B cell (primary cell): ENCODE measurements at regions of chr10 and their contacts with region 1.

Region 1: DNA sequence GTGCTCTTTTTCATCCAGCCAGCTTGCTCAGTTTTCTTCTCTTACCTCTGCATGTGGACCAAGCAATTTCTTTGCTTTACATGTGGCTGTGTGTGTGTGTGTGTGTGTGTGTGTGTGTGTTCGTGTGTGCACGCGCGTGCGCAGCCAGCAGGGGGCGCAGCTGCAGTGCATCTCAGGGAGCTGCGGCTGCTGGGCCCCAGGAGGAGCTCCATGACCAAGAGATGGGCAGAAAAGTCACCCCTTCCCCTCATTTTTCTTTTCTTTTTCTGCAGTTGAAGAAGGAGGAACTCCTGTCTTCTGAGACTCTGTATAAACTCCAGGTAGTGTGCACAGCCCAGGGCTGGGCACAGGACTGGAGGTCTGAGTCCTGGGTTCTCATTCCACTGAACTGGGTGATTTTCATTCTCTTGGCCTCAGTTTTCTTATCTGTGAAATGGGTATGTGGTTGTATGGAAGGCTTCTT is 41.8 kb downstream of the BLNK start:
- DNase-seq: peak; percentile 91
- ATAC-seq: peak; percentile 72
- H3K4me3 ChIP-seq: no peak overlapping the region
- H3K4me3 Mint-ChIP-seq: peak overlapping the region; percentile 14
- H3K27ac ChIP-seq: peak overlapping the region; percentile 55 to 77
- H3K27ac Mint-ChIP-seq: peak overlapping the region; percentile 90
- H3K4me1 ChIP-seq: peaks cover 21 to 34% of the 10 kb centered on the region in 2 donors
- H3K4me1 Mint-ChIP-seq: peaks cover 44% of the 10 kb centered on the region
- H3K27me3 ChIP-seq: no peaks in the 10 kb centered on the region
- H3K27me3 Mint-ChIP-seq: no peaks in the 10 kb centered on the region
- CTCF ChIP-seq: peak; percentile 84

Region 2: DNA sequence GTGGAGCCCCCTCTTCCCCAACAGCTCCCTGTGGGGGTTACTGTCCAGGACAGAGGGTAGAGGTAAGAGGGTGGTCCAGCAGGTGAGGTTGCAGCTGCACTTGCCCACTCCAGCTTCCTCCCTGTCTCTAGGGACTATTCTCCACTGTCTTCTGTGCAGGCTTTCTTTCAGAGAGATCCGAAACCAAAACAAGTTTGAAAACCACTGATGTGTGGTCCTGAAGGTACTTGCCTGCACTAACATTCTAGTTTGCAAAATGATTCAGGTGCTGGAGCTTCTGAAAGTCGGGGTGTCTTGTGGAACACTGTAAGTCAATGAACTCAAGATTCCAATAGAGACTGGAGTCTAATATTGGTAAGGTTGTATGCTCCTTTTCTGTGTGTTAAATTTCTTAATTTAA is 21.3 kb before region 1 on chr10:
- CTCF ChIA-PET with region 1: interaction called, 19 read pairs
- POLR2A ChIA-PET with region 1: interaction called, 3 read pairs
- intact Hi-C with region 1: no loop called
- DNase-seq: no peak
- ATAC-seq: no peak
- H3K4me3 ChIP-seq: no peak overlapping the region
- H3K4me3 Mint-ChIP-seq: no peak overlapping the region
- H3K27ac ChIP-seq: peak overlapping the region in 1 of 2 donors; percentile 7
- H3K27ac Mint-ChIP-seq: no peak overlapping the region
- H3K4me1 ChIP-seq: peaks cover 4 to 7% of the 10 kb centered on the region in 2 donors
- H3K4me1 Mint-ChIP-seq: peaks cover 14% of the 10 kb centered on the region
- H3K27me3 ChIP-seq: no peaks in the 10 kb centered on the region
- H3K27me3 Mint-ChIP-seq: no peaks in the 10 kb centered on the region
- CTCF ChIP-seq: no peak

Region 3: DNA sequence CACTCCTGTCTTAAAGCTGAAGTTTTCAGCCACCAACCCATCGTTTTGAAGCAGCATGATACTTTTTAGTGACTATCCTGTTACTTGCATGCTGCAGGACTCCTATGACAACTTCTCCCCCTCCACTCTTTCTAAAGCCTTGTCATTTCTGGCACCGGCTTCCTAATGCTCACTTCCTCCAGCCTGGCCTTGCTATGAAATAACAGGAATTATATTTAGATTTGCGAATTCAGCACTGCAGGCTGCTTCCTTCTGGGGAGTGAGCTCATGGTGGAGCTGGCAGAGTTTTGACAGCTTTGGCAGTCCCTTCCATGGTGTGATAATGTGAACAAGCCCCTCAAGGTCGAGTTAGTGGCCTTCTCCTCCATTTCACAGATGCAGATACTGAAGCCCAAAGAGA is 28.3 kb after region 1 on chr10:
- CTCF ChIA-PET with region 1: interaction called, 111 read pairs
- POLR2A ChIA-PET with region 1: no interaction called
- intact Hi-C with region 1: no loop called
- DNase-seq: no peak
- ATAC-seq: no peak
- H3K4me3 ChIP-seq: peak overlapping the region in 1 of 5 experiments; percentile 0
- H3K4me3 Mint-ChIP-seq: peak overlapping the region; percentile 63
- H3K27ac ChIP-seq: peak overlapping the region; percentile 36 to 79
- H3K27ac Mint-ChIP-seq: peak overlapping the region; percentile 87
- H3K4me1 ChIP-seq: peaks cover 79 to 83% of the 10 kb centered on the region in 2 donors
- H3K4me1 Mint-ChIP-seq: peaks cover 76% of the 10 kb centered on the region
- H3K27me3 ChIP-seq: no peaks in the 10 kb centered on the region
- H3K27me3 Mint-ChIP-seq: no peaks in the 10 kb centered on the region
- CTCF ChIP-seq: no peak

Region 4: GRCh38 chr10:96287392-96288105 is 58.0 kb after region 1 on chr10:
- CTCF ChIA-PET with region 1: interaction called, 964 read pairs
- POLR2A ChIA-PET with region 1: interaction called, 37 read pairs
- intact Hi-C with region 1: loop called (anchors 1 kb)
- DNase-seq: peak; percentile 83
- ATAC-seq: peak; percentile 76
- H3K4me3 ChIP-seq: peak overlapping the region; percentile 42 to 77 (median 67)
- H3K4me3 Mint-ChIP-seq: peak overlapping the region; percentile 84
- H3K27ac ChIP-seq: peak overlapping the region; percentile 86
- H3K27ac Mint-ChIP-seq: peak overlapping the region; percentile 92
- H3K4me1 ChIP-seq: peaks cover 63 to 64% of the 10 kb centered on the region in 2 donors
- H3K4me1 Mint-ChIP-seq: peaks cover 76% of the 10 kb centered on the region
- H3K27me3 ChIP-seq: no peaks in the 10 kb centered on the region
- H3K27me3 Mint-ChIP-seq: no peaks in the 10 kb centered on the region
- CTCF ChIP-seq: no peak

Region 5: DNA sequence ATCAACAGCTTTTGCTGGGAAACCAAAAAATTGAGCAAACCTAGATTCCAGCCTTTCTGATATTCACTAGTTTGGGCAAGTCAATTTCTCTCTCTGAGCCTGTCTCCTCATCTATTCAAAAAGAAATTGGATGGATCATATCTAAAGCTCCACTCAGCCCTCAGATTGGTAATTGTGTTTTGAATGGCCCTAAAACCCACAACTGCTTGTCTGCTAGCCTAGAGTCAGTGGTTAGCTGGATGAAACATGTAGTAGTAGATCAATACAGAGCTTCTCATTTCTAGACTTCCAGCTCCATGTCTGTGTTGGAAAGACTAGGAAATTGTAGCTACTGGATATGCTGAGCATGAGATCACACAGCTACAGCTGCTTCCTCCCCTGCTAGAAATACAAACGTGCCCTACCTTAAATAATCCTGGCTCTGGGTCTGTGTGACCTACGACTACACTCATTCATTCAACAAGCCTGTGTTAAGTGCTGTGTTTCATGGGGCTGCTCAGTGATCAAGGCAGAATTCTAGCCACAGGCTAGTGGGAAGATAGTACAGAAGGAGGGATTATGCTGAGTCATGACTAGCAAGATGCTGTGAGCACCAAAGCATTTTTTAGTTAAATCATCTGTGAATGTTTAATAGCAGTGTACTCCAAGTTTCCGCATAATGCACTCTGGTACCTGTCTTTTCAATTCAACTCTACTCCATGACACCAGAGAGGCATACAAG is 90.3 kb after region 1 on chr10:
- CTCF ChIA-PET with region 1: interaction called, 47 read pairs
- POLR2A ChIA-PET with region 1: no interaction called
- intact Hi-C with region 1: no loop called
- DNase-seq: no peak
- ATAC-seq: no peak
- H3K4me3 ChIP-seq: no peak overlapping the region
- H3K4me3 Mint-ChIP-seq: no peak overlapping the region
- H3K27ac ChIP-seq: no peak overlapping the region
- H3K27ac Mint-ChIP-seq: no peak overlapping the region
- H3K4me1 ChIP-seq: no peaks in the 10 kb centered on the region
- H3K4me1 Mint-ChIP-seq: no peaks in the 10 kb centered on the region
- H3K27me3 ChIP-seq: peaks cover 0 to 5% (median 0%) of the 10 kb centered on the region in 4 experiments
- H3K27me3 Mint-ChIP-seq: peaks cover 27% of the 10 kb centered on the region
- CTCF ChIP-seq: no peak